GM12878 (cell line): ENCODE measurements at regions of chr16 and their contacts with region 1.

Region 1: DNA sequence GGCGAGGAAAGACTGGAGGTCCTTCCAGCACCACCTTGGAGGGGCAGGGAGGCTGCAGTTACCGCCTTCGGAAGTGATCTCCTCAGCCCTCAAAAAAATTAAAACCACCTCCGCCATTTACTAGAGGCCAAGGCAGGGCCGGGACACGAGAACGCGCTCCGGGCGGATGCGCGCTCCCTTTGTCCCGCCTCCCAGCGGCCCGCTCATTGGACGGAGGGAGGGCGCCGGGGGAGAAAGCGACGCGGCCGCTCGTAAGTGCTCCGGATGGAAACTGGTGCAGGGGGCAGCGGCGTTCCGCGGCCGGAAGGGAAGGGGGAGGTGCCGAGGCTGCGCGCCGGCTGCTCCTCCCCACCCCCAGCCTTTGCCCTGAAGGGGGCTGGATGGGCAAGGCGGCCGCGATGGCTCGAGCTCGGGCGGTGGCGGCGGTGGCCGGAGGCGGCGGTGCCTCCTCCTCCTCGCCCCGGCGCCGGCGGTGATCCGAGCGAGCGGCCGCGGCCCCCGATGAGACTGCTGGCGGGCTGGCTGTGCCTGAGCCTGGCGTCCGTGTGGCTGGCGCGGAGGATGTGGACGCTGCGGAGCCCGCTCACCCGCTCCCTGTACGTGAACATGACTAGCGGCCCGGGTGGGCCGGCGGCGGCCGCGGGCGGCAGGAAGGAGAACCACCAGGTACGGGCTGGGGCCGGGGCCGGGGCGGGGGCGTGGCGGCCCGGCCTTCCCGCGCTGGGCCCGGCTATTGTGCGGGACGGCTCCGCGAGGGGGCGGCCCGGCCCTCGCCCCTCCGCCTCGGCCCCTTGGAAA is at the start of gene METTL9:
- DNase-seq: peak; percentile 73
- ATAC-seq: peak; percentile 92
- H3K4me3 ChIP-seq: peak within 1 kb of the TSS; percentile 87
- H3K27ac ChIP-seq: peak within 1 kb of the TSS; percentile 84
- H3K4me1 ChIP-seq: peaks cover 6% of the 10 kb centered on the region; the same call in 1 of the 2 replicates
- H3K27me3 ChIP-seq: no peaks in the 10 kb centered on the region
- CTCF ChIP-seq: peak in 1 of 3 experiments; percentile 4; a peak in 1 of 6 replicates
- EP300 ChIP-seq: peak; percentile 23 to 30; a peak in 1 of 4 replicates
- POLR2A ChIP-seq: peak; percentile 89
- RAD21 ChIP-seq: no peak
- polyA plus RNA-seq, gene METTL9: 19.4 to 40.0 TPM

Region 2: GRCh38 chr16:21638573-21638975 is 39.1 kb after region 1 on chr16:
- CTCF ChIA-PET with region 1: interaction called, 32 read pairs
- POLR2A ChIA-PET with region 1: interaction called, 4 read pairs
- RAD21 ChIA-PET with region 1: interaction called, 27 read pairs
- SMC1A ChIA-PET with region 1: interaction called, 204 read pairs
- in situ Hi-C with region 1: no loop called
- intact Hi-C with region 1: loop called (anchors 2 kb)
- DNase-seq: no peak
- ATAC-seq: peak; percentile 81
- H3K4me3 ChIP-seq: no peak overlapping the region
- H3K27ac ChIP-seq: no peak overlapping the region
- H3K4me1 ChIP-seq: 0 out of 2 replicates have a peak, but pooled peaks cover 2% of the 10 kb centered on the region
- H3K27me3 ChIP-seq: no peaks in the 10 kb centered on the region
- CTCF ChIP-seq: no peak
- EP300 ChIP-seq: no peak
- POLR2A ChIP-seq: no peak
- RAD21 ChIP-seq: no peak

Region 3: GRCh38 chr16:21646721-21647561 is 47.5 kb after region 1 on chr16:
- CTCF ChIA-PET with region 1: interaction called, 10 read pairs
- POLR2A ChIA-PET with region 1: interaction called, 7 read pairs
- RAD21 ChIA-PET with region 1: interaction called, 13 read pairs
- SMC1A ChIA-PET with region 1: interaction called, 204 read pairs
- in situ Hi-C with region 1: no loop called
- intact Hi-C with region 1: no loop called
- DNase-seq: peak; percentile 99
- ATAC-seq: peak; percentile 91
- H3K4me3 ChIP-seq: no peak overlapping the region
- H3K27ac ChIP-seq: peak overlapping the region; percentile 88
- H3K4me1 ChIP-seq: peaks cover 33% of the 10 kb centered on the region
- H3K27me3 ChIP-seq: no peaks in the 10 kb centered on the region
- CTCF ChIP-seq: no peak
- EP300 ChIP-seq: peak; percentile 36 to 74; a peak in 3 of 4 replicates
- POLR2A ChIP-seq: no peak
- RAD21 ChIP-seq: no peak